Sigmoid colon (tissue), 7 donors: ENCODE measurements at regions of chr20 and their contacts with region 1.

Region 1: GRCh38 chr20:13325033-13325432 is 104.0 kb downstream of the ISM1 start:
- DNase-seq: no peak
- H3K4me3 ChIP-seq: no peak overlapping the region
- H3K27ac ChIP-seq: no peak overlapping the region
- H3K4me1 ChIP-seq: peaks cover 0 to 39% (median 13%) of the 10 kb centered on the region in 4 donors
- H3K27me3 ChIP-seq: no peaks in the 10 kb centered on the region
- CTCF ChIP-seq: peak in 3 of 4 experiments; percentile 26 to 44 (median 39)
- EP300 ChIP-seq: no peak
- POLR2A ChIP-seq: no peak

Region 2: DNA sequence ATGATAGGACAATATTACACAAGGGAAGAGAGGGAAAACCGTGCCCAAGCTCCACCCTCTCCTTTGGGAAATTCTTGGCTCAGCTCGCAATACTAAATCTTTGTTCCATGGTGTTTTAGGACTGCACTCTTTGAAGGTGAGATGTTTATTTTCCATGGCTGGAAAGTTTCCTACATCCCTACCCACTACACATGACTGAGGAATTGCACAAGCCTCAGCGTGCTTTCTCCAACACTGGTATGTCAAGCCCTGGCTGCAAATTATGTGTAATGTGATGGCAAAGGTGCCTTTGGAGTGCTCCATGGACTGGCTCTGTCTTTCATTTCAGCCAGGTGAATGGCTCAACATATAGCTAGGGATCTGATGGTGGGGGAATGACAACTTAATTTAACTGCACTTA is 30.4 kb after region 1 on chr20:
- intact Hi-C with region 1: loop called (anchors 5 kb)
- DNase-seq: peak; percentile 84
- H3K4me3 ChIP-seq: no peak overlapping the region
- H3K27ac ChIP-seq: peak overlapping the region; percentile 20 to 74 (median 49)
- H3K4me1 ChIP-seq: peaks cover 0 to 23% (median 12%) of the 10 kb centered on the region in 4 donors
- H3K27me3 ChIP-seq: no peaks in the 10 kb centered on the region
- CTCF ChIP-seq: no peak
- EP300 ChIP-seq: peak; percentile 57 to 90 (median 88)
- POLR2A ChIP-seq: no peak

Region 3: GRCh38 chr20:13418263-13419229 is 93.5 kb after region 1 on chr20:
- intact Hi-C with region 1: loop called (anchors 5 kb)
- DNase-seq: no peak
- H3K4me3 ChIP-seq: no peak overlapping the region
- H3K27ac ChIP-seq: peak overlapping the region in 2 of 4 donors; percentile 59 to 64
- H3K4me1 ChIP-seq: peaks cover 0 to 28% (median 18%) of the 10 kb centered on the region in 4 donors
- H3K27me3 ChIP-seq: no peaks in the 10 kb centered on the region
- CTCF ChIP-seq: no peak
- EP300 ChIP-seq: no peak
- POLR2A ChIP-seq: no peak

Region 4: GRCh38 chr20:13546497-13547131 is 221.6 kb after region 1 on chr20:
- intact Hi-C with region 1: loop called (anchors 5 kb)
- DNase-seq: peak; percentile 89
- H3K4me3 ChIP-seq: no peak overlapping the region
- H3K27ac ChIP-seq: no peak overlapping the region
- H3K4me1 ChIP-seq: peaks cover 0 to 16% (median 12%) of the 10 kb centered on the region in 4 donors
- H3K27me3 ChIP-seq: no peaks in the 10 kb centered on the region
- CTCF ChIP-seq: peak; percentile 46 to 87 (median 80)
- EP300 ChIP-seq: no peak
- POLR2A ChIP-seq: no peak

Region 5: DNA sequence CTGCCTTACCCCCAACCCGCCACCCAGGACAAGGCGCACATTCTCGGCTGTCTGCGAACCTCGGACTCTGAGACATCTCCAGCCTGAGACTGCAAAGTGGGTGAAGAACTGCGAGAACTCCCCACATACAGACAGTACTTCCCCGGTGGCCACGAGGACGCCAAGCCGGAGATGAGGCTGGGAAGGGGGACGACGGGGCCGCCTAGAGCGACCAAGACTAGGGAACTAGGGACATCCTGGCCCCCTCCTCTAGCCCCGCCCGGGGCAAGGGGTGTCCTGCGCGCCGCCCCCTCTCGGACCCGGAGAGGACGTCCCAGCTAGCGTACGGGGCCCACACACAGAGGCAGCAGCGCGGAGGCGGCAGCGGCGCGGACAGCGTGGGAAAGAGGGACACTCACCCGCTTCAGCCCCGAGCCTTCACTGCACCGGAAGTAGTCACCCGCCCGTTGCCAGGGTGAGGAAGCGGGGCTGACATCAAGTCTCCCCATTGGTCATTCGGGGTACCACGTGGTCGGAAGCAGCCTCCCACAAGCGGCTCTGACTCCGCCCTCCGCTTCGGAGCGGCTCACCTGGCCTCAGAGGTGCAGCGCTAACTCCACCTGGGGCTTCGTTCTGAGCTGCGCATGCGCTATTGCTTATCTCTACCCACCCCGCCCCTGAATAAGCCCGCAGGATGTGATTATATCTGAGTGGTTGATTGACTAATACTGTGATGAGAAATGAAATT is 313.6 kb after region 1 on chr20 and contains the start of gene TASP1:
- intact Hi-C with region 1: loop called (anchors 10 kb)
- DNase-seq: peak; percentile 98
- H3K4me3 ChIP-seq: peak within 1 kb of the TSS; percentile 79 to 99 (median 94)
- H3K27ac ChIP-seq: peak within 1 kb of the TSS; percentile 74 to 81 (median 80)
- H3K4me1 ChIP-seq: peaks cover 0 to 13% (median 11%) of the 10 kb centered on the region in 4 donors
- H3K27me3 ChIP-seq: no peaks in the 10 kb centered on the region
- CTCF ChIP-seq: no peak
- EP300 ChIP-seq: no peak
- POLR2A ChIP-seq: peak in 1 of 2 donors; percentile 41
- total RNA-seq, gene TASP1: 7.8 to 13.0 (median 11.8) TPM

Region 6: GRCh38 chr20:13736436-13737191 is 411.6 kb after region 1 on chr20:
- intact Hi-C with region 1: loop called (anchors 10 kb)
- DNase-seq: no peak
- H3K4me3 ChIP-seq: no peak overlapping the region
- H3K27ac ChIP-seq: peak overlapping the region; percentile 40 to 79 (median 74)
- H3K4me1 ChIP-seq: peaks cover 0 to 32% (median 20%) of the 10 kb centered on the region in 4 donors
- H3K27me3 ChIP-seq: no peaks in the 10 kb centered on the region
- CTCF ChIP-seq: no peak
- EP300 ChIP-seq: peak in 3 of 4 donors; percentile 14 to 74 (median 53)
- POLR2A ChIP-seq: no peak

Region 7: GRCh38 chr20:13865791-13866351 is 540.8 kb after region 1 on chr20:
- intact Hi-C with region 1: loop called (anchors 10 kb)
- DNase-seq: no peak
- H3K4me3 ChIP-seq: no peak overlapping the region
- H3K27ac ChIP-seq: peak overlapping the region; percentile 75 to 83 (median 82)
- H3K4me1 ChIP-seq: peaks cover 0 to 48% (median 41%) of the 10 kb centered on the region in 4 donors
- H3K27me3 ChIP-seq: no peaks in the 10 kb centered on the region
- CTCF ChIP-seq: no peak
- EP300 ChIP-seq: peak in 3 of 4 donors; percentile 61 to 76 (median 67)
- POLR2A ChIP-seq: no peak